ENCODE measurements at regions of chr1 and their contacts with region 1.

Region 1: DNA sequence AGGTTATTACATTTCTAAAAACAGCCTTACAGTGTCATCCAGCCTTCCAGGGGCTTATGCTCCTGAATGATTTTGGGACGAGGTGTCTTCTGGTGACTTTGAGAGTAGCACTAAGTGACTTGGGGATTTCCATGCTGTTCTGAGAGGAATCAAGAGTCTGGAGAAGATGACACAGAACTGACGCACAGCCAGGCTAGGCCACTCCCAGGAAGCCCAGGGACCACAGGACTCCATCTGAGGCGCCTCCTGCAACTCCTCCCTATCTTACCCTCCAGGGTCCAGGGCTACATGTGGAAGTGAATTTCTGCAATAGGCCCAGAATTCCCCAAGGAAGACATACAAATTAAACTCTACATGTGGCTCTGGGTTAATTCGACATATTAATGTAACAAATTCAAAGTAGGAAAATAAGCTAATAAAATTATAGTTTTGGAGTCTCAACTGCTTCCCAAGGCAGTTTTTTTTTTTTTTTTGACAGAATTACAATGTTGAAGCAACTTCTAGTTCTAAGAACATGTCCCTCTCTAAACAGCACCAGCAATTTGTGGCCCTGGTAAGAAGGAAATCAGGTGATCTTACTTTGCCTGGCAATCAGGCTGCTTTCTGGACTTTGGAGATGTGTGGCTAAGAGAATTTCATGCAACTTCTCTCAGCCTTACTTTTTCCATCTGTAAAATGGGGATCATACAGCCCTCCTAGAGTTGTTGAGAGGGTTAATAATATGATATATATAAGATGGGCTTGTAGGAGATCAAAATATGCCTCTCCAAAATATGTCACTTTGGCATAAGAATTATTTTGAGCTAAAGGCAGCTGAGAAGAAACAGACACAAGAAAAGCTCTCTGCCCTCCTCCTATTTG is 92.3 kb downstream of the SLC25A24 start:
- DNase-seq: peak; percentile 66
- H3K4me3 Mint-ChIP-seq: no peak overlapping the region
- H3K27ac Mint-ChIP-seq: peak overlapping the region; percentile 39
- H3K4me1 Mint-ChIP-seq: peaks cover 4% of the 10 kb centered on the region
- H3K27me3 Mint-ChIP-seq: no peaks in the 10 kb centered on the region

Region 2: GRCh38 chr1:108079440-108080025 is 28.4 kb before region 1 on chr1:
- intact Hi-C with region 1: loop called (anchors 2 kb)
- DNase-seq: peak; percentile 82
- H3K4me3 Mint-ChIP-seq: peak overlapping the region; percentile 55
- H3K27ac Mint-ChIP-seq: peak overlapping the region; percentile 58
- H3K4me1 Mint-ChIP-seq: peaks cover 53% of the 10 kb centered on the region
- H3K27me3 Mint-ChIP-seq: no peaks in the 10 kb centered on the region

Measured in activated CD4-positive, alpha-beta T cell treated with anti-CD3 and anti-CD28 coated beads, Interleukin-2, amount 10 ng/mL, durations not matched to agents 24 days and 14 days (primary cell).